Heart right ventricle (tissue), 16 donors: ENCODE measurements at regions of chr19 and their contacts with region 1.

Region 1: DNA sequence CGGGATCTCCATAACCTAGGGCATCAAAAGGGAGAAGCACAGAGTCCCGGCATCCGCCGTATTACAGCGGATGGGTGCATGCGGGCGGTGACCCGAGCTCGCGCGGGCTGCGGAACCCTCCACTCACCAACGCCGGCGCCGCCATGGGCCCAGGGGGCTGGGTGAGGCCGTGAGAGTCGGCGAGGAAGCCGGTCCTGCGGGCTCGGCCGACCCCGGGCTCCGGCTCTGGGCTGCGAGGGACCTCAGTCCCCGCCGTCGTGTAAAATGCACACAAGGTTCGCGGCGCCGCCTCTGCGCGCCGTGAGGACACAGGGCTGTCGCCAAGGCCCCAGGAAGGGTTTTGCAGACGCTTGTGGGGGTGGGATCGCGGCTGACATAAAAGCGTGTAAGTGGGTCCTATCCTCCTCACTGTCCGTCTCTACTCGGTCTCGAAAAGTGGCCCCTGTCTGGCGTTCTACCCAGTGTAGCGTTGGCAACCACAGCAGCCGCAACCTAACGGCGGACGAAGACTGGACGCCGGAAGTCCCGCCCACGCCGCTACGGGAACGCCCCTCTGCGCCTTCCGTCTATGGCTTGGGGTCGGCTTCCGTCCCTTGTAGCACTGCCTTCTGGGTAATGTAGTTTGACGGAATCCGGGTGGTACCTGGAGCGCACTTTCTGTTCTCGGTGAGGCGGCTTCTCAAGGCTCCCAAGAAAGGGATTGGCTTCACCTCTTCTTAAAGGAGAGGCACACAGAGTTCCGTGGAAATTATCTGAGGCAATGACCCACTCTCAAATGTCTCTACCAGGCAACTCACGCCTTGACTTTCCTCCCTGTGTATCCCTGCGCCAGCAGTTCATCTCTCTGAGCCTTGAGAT is at the start of gene ZNF599:
- DNase-seq: peak; percentile 92 to 93
- ATAC-seq: peak; percentile 98 to 100 (median 100)
- H3K4me3 ChIP-seq: peak within 1 kb of the TSS; percentile 48 to 95 (median 88)
- H3K27ac ChIP-seq: peak within 1 kb of the TSS; percentile 31 to 91 (median 87)
- H3K4me1 ChIP-seq: peaks cover 0 to 17% (median 8%) of the 10 kb centered on the region in 9 donors
- H3K27me3 ChIP-seq: peaks cover 0 to 10% (median 0%) of the 10 kb centered on the region in 7 donors
- CTCF ChIP-seq: no peak
- total RNA-seq, gene ZNF599: 2.6 to 5.0 (median 3.5) TPM

Region 2: GRCh38 chr19:34677386-34678084 is 95.4 kb before region 1 on chr19 and contains the start of gene ZNF302:
- intact Hi-C with region 1: loop called in 1 of 10 experiments (anchors 5 kb)
- DNase-seq: peak; percentile 96 to 97
- ATAC-seq: peak; percentile 99 to 100 (median 99)
- H3K4me3 ChIP-seq: peak within 1 kb of the TSS; percentile 65 to 90 (median 83)
- H3K27ac ChIP-seq: peak within 1 kb of the TSS; percentile 95 to 99 (median 98)
- H3K4me1 ChIP-seq: peaks cover 5 to 39% (median 20%) of the 10 kb centered on the region in 9 donors
- H3K27me3 ChIP-seq: no peaks in the 10 kb centered on the region
- CTCF ChIP-seq: no peak
- total RNA-seq, gene ZNF302: 29.1 to 42.5 (median 32.6) TPM

Region 3: DNA sequence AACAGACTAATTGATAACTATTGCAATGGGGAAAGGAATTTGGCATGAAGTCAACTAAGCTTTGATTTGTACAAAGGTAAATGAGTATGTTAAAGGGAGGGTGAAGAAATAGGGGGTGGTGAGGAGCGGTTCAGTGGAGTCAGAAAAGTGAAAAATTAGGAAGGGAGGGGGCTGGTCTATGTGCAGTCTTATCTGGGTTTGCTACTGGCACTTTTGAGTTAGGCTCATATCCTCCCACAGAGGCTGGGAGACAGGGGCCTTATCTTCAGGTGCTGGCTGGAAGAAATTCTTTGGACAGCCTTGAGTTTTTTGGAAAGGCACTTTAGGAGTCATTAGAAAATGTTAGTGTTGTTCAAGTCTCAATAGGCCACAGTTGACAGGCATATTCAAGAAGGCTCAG is 84.3 kb before region 1 on chr19:
- intact Hi-C with region 1: no loop called
- DNase-seq: no peak
- ATAC-seq: no peak
- H3K4me3 ChIP-seq: no peak overlapping the region
- H3K27ac ChIP-seq: no peak overlapping the region
- H3K4me1 ChIP-seq: no peaks in the 10 kb centered on the region
- H3K27me3 ChIP-seq: no peaks in the 10 kb centered on the region
- CTCF ChIP-seq: no peak

Region 4: GRCh38 chr19:34926685-34927375 is 153.9 kb after region 1 on chr19 and contains the start of gene ZNF30:
- intact Hi-C with region 1: loop called in 2 of 10 experiments (anchors 2 kb)
- DNase-seq: peak; percentile 92 to 94
- ATAC-seq: peak; percentile 99 to 100 (median 100)
- H3K4me3 ChIP-seq: peak within 1 kb of the TSS; percentile 52 to 79 (median 67)
- H3K27ac ChIP-seq: peak within 1 kb of the TSS; percentile 16 to 86 (median 82)
- H3K4me1 ChIP-seq: peaks cover 0 to 22% (median 10%) of the 10 kb centered on the region in 9 donors
- H3K27me3 ChIP-seq: peaks cover 0 to 11% (median 0%) of the 10 kb centered on the region in 7 donors
- CTCF ChIP-seq: peak in 2 of 9 donors; percentile 4 to 6
- total RNA-seq, gene ZNF30: 1.6 to 4.5 (median 2.6) TPM